ENCODE measurements at regions of chr19 and their contacts with region 1.

Region 1: DNA sequence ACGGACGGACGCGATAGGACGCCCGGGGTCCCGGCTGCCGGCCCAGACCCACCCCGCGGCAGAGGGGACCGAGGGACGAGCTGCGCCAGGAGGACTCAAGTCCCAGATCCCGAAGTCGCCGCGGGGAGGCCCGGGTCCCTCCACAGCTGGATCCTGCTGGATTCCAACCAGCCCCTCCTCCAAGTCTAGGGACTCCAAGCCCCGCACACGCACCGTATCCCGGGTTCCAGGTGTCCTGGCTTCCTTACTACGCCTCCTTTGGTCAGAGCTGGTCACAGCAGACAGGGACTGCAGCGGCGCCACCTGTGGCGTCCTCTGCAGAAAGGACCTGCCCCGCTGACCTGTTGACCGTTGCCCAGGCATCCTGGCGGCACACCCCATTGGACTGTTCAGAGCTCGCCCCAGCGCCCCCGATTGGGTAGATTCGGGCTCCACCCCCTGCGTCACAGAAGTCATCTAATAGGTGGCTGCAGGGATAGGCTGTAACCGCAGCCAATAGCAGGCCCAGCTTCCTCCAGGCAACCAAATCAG is 29.0 kb upstream of the ZNF709 start:
- DNase-seq: no peak
- ATAC-seq: no peak
- H3K4me3 ChIP-seq: no peak overlapping the region
- H3K4me3 Mint-ChIP-seq: no peak overlapping the region
- H3K27ac ChIP-seq: no peak overlapping the region
- H3K27ac Mint-ChIP-seq: no peak overlapping the region
- H3K4me1 ChIP-seq: no peaks in the 10 kb centered on the region
- H3K4me1 Mint-ChIP-seq: no peaks in the 10 kb centered on the region
- H3K27me3 ChIP-seq: peaks cover 0 to 6% of the 10 kb centered on the region in 2 experiments
- H3K27me3 Mint-ChIP-seq: peaks cover 4% of the 10 kb centered on the region
- CTCF ChIP-seq: no peak

Region 2: GRCh38 chr19:11950312-11950711 is 563.3 kb before region 1 on chr19:
- CTCF ChIA-PET with region 1: no interaction called
- POLR2A ChIA-PET with region 1: no interaction called
- intact Hi-C with region 1: loop called in 1 of 2 experiments (anchors 10 kb)
- DNase-seq: no peak
- ATAC-seq: no peak
- H3K4me3 ChIP-seq: no peak overlapping the region
- H3K4me3 Mint-ChIP-seq: no peak overlapping the region
- H3K27ac ChIP-seq: no peak overlapping the region
- H3K27ac Mint-ChIP-seq: no peak overlapping the region
- H3K4me1 ChIP-seq: no peaks in the 10 kb centered on the region
- H3K4me1 Mint-ChIP-seq: no peaks in the 10 kb centered on the region
- H3K27me3 ChIP-seq: no peaks in the 10 kb centered on the region
- H3K27me3 Mint-ChIP-seq: no peaks in the 10 kb centered on the region
- CTCF ChIP-seq: no peak

Region 3: DNA sequence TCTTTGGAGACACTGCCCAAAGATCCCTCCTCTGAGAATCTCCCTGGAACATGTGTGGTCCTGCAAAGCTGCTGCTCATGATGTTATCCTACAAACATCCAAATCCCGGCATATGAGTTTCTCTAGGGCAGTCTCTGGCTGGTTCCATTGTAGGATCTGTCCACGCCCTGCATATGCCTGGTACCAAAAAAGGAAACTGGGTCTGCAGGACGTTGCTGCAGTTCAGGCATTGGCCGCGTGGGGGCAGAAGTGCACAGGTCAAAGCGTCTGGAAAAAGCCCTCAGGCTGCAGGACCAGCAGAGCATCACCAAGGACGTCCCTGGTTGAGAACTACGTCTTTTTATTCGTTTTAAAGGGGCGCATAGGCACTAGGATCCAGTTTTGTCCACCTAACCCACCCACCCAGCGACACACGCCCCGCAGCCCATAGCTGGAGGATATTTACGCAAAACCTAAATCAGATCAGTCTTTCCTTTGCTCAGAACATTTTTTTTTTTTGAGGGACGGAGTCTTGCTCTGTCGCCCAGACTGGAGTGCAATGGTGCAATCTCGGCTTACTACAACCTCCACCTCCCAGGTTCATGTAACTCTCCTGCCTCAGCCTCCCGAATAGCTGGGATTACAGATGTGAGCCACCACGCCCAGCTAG is 50.5 kb after region 1 on chr19:
- CTCF ChIA-PET with region 1: no interaction called
- POLR2A ChIA-PET with region 1: no interaction called
- intact Hi-C with region 1: no loop called
- DNase-seq: peak; percentile 76 to 97 (median 92)
- ATAC-seq: peak; percentile 100
- H3K4me3 ChIP-seq: no peak overlapping the region
- H3K4me3 Mint-ChIP-seq: no peak overlapping the region
- H3K27ac ChIP-seq: no peak overlapping the region
- H3K27ac Mint-ChIP-seq: no peak overlapping the region
- H3K4me1 ChIP-seq: peaks cover 8% of the 10 kb centered on the region
- H3K4me1 Mint-ChIP-seq: peaks cover 5% of the 10 kb centered on the region
- H3K27me3 ChIP-seq: no peaks in the 10 kb centered on the region
- H3K27me3 Mint-ChIP-seq: no peaks in the 10 kb centered on the region
- CTCF ChIP-seq: peak; percentile 98

Measured in CD4-positive, alpha-beta T cell (primary cell).